ENCODE measurements at regions of chr14 and their contacts with region 1.

Region 1: DNA sequence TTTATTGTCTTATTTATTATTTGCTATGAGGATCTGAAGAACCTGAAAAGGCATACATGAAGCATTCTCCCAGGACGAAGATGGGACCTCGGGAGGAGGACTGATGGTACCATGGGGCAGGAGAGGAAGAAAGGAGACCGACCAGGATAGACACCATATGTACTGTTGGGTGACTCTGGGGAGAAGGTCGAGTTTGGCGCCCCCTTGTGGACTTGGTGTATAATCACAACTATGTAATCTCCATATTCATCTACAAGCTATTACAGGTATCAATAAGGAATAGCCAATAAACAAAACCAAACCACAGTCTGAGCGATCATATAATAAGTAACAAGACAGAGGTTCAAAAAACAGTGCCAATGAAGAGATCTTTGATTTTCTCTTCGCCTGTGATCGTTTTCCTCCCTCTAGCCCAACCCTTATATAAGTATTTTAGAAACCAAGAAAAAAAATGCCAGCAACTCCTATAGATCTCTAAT is 139.1 kb downstream of the SPTSSA start:
- DNase-seq: peak; percentile 84
- H3K4me3 Mint-ChIP-seq: no peak overlapping the region
- H3K27ac Mint-ChIP-seq: no peak overlapping the region
- H3K4me1 Mint-ChIP-seq: no peaks in the 10 kb centered on the region
- H3K27me3 Mint-ChIP-seq: peaks cover 3% of the 10 kb centered on the region

Region 2: DNA sequence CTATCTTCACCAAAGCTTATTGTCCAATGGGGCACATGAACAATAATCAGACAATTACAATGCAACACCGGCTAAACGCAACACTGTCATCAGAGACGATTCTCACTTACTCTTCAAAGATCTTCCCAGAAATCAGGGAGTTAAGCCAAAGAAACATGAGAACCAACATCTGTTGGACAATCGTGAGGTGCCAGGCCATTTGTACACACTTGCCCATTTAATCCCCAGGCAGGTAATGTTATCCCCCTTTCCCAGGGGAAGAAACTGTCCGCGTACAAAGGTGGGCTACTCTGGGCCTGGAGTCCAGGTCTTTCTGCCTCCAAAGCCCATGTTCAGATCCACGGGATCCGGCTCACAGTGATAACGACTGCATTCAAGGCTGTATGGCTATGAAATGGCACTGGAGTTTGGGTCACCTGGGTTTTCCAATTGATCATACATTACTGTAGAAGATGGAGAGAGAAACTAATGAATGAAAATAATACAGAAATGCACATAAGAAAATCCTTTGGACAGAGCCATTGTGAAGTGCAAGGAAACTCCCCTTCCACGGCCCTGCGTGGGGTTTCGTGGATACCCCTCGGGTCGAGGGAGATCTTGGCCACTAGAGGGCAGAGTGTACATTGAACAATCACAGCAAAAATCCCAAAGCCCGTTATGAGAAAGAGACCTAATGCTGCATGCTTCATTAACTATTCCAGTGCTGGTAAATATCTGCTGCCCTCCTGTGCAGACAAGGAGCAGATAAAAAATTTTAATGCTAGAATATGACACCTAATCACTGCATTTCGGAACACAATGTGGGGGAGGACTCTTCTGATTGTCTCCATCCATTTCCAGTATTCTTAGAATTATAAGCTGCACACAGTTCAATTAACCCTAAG is 483.5 kb before region 1 on chr14:
- CTCF ChIA-PET with region 1: interaction called, 4 read pairs
- intact Hi-C with region 1: loop called (anchors 1 kb)
- DNase-seq: peak; percentile 61
- H3K4me3 Mint-ChIP-seq: no peak overlapping the region
- H3K27ac Mint-ChIP-seq: no peak overlapping the region
- H3K4me1 Mint-ChIP-seq: no peaks in the 10 kb centered on the region
- H3K27me3 Mint-ChIP-seq: no peaks in the 10 kb centered on the region

Region 3: DNA sequence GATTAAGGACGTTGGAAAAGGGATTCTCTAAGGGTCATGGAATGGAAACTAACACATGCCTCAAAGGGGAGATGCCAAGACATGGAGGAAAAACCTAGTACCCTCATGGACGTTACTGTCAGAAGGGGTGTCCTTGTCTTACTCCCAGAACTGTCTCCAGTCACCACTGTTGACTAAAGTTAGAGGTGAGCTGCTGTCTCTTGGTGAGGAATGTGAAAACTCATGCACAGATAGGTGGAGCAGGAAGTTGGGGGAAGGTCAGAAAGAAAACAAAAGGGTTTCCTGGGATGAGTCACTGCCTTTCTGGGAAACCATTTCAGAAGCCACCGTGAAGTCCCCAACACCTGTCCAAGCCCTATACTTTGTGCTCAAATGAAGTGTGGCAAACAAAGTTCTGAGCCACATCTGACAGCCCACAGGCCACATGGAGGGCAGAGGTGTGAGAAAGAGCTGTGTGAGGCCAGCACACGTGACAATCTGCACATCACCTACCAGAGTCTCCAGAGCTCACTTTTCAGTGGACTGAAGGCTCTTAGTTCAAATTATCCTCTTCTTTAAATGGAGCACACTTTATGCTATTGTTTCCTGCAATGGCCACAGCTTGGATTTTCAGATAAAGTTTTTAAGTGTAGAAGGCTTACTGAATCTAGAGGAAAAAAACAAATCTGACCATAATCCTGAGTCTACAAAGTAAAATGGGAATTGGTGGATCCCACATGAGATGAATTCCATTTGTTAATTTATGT is 279.2 kb before region 1 on chr14:
- CTCF ChIA-PET with region 1: no interaction called
- intact Hi-C with region 1: loop called (anchors 2 kb)
- DNase-seq: peak; percentile 87
- H3K4me3 Mint-ChIP-seq: no peak overlapping the region
- H3K27ac Mint-ChIP-seq: peak overlapping the region; percentile 54
- H3K4me1 Mint-ChIP-seq: peaks cover 25% of the 10 kb centered on the region
- H3K27me3 Mint-ChIP-seq: no peaks in the 10 kb centered on the region

Region 4: GRCh38 chr14:34098045-34098984 is 224.7 kb before region 1 on chr14:
- CTCF ChIA-PET with region 1: no interaction called
- intact Hi-C with region 1: loop called (anchors 10 kb)
- DNase-seq: peak; percentile 19
- H3K4me3 Mint-ChIP-seq: no peak overlapping the region
- H3K27ac Mint-ChIP-seq: no peak overlapping the region
- H3K4me1 Mint-ChIP-seq: no peaks in the 10 kb centered on the region
- H3K27me3 Mint-ChIP-seq: no peaks in the 10 kb centered on the region

Region 5: GRCh38 chr14:34227834-34228649 is 94.9 kb before region 1 on chr14:
- CTCF ChIA-PET with region 1: interaction called, 8 read pairs
- intact Hi-C with region 1: loop called (anchors 5 kb)
- DNase-seq: peak; percentile 71
- H3K4me3 Mint-ChIP-seq: no peak overlapping the region
- H3K27ac Mint-ChIP-seq: no peak overlapping the region
- H3K4me1 Mint-ChIP-seq: peaks cover 3% of the 10 kb centered on the region
- H3K27me3 Mint-ChIP-seq: peaks cover 4% of the 10 kb centered on the region

Region 6: DNA sequence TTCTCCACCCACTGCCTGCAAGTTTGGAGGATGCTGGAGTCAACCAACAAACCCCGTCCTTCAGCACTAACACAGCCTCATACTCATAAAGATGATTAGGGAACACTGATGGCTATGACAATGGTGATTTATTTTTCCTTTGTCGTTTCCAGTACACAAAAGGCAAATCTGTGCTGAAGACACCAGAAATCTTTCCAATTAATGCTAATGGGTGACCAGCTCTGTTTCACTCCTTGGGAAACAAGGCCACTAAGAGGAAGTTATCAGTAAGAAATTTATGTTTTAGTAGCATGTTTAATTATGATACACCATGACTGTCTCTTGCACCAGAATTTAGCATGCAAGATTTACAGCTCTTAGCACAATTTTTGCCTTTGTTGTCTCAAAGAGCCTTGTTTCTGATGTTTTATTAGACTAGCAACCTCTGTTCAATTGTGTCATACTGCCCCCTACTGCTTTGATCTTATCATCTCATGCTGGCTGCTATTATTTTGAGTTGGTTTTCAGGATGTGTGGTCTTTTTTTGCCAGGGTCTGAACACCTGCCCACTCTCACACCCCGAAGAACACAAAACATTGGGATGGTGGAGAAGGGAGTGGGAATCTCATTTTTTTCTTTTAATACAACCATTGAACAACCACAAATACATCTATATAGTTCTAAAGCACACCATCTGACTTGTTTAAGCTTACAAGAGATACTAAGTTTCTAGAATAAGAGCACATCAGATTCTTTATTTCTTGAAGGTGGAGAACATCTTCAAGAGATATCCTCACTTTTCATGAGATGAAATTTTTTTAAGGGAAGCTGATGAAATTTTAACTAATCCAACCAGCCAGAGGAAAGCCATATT is 21.9 kb before region 1 on chr14:
- CTCF ChIA-PET with region 1: interaction called, 31 read pairs
- intact Hi-C with region 1: no loop called
- DNase-seq: peak; percentile 13
- H3K4me3 Mint-ChIP-seq: no peak overlapping the region
- H3K27ac Mint-ChIP-seq: no peak overlapping the region
- H3K4me1 Mint-ChIP-seq: no peaks in the 10 kb centered on the region
- H3K27me3 Mint-ChIP-seq: no peaks in the 10 kb centered on the region

Region 7: GRCh38 chr14:34355584-34356263 is 32.7 kb after region 1 on chr14:
- CTCF ChIA-PET with region 1: interaction called, 13 read pairs
- intact Hi-C with region 1: no loop called
- DNase-seq: no peak
- H3K4me3 Mint-ChIP-seq: no peak overlapping the region
- H3K27ac Mint-ChIP-seq: no peak overlapping the region
- H3K4me1 Mint-ChIP-seq: no peaks in the 10 kb centered on the region
- H3K27me3 Mint-ChIP-seq: no peaks in the 10 kb centered on the region